H1 (cell line): ENCODE measurements at regions of chr12 and their contacts with region 1.

Region 1: DNA sequence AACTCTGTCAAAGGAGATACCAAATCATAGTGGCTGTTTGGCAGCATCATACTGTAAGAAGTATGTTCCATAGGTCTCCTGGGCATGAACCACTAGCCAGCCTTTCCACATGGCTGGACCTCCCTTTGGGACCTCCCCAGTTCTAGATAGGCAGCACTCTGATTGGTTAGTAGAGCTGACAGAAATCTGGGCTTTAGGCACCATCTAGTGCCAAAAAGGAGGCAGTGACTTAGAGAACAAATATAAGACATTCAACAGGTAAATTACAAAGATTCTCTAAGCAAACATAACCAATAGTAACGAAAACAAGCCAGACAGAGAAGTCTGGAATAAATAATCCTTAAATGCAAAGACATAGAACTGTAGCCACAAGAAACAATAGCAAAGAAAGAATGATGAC is 148.0 kb upstream of the PDE3A start:
- DNase-seq: no peak
- H3K4me3 ChIP-seq: no peak overlapping the region
- H3K27ac ChIP-seq: no peak overlapping the region
- H3K4me1 ChIP-seq: no peaks in the 10 kb centered on the region
- H3K27me3 ChIP-seq: peaks cover 0 to 1% (median 0%) of the 10 kb centered on the region in 4 experiments; a peak in 1 of 7 replicates
- CTCF ChIP-seq: peak in 2 of 3 experiments; percentile 53 to 54; a peak in 3 of 4 replicates
- EP300 ChIP-seq: no peak
- POLR2A ChIP-seq: no peak
- RAD21 ChIP-seq: peak; percentile 84 to 89

Region 2: DNA sequence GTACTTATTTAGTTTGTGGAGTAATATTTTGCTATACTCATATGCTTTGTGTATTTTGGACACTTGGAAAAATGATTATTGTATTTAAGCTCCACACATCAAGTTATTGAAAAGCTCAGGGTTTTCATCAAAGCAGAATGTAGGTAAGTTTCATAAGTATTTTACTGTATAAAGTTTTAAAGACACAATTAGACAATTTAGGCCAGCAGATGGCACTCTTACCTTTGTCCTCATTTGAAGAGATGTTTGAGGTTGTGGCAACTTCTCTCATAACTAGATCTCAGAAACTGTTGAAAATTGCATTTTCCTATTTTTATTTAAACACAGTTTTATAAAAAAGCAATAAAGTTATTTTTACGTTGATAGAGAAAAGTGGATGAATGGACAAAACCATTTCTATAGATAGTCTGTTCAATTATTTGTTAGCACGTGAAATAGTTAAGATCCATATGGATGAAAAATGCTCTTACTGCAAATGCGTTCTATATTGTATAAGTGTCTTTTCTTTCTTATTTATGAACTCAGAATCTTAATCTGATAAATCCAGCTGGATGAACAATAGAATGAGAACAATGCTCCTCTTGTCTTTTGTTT is 481.1 kb before region 1 on chr12:
- CTCF ChIA-PET with region 1: interaction called, 10 read pairs
- POLR2A ChIA-PET with region 1: no interaction called
- DNase-seq: no peak
- H3K4me3 ChIP-seq: no peak overlapping the region
- H3K27ac ChIP-seq: no peak overlapping the region
- H3K4me1 ChIP-seq: no peaks in the 10 kb centered on the region
- H3K27me3 ChIP-seq: no peaks in the 10 kb centered on the region
- CTCF ChIP-seq: peak in 2 of 3 experiments; percentile 53; a peak in 2 of 4 replicates
- EP300 ChIP-seq: no peak
- POLR2A ChIP-seq: no peak
- RAD21 ChIP-seq: peak; percentile 78 to 81

Region 3: GRCh38 chr12:19915392-19916195 is 304.7 kb before region 1 on chr12:
- CTCF ChIA-PET with region 1: interaction called, 15 read pairs
- POLR2A ChIA-PET with region 1: no interaction called
- DNase-seq: no peak
- H3K4me3 ChIP-seq: no peak overlapping the region
- H3K27ac ChIP-seq: no peak overlapping the region
- H3K4me1 ChIP-seq: peaks cover 0 to 15% (median 4%) of the 10 kb centered on the region in 4 experiments; a peak in 3 of 7 replicates
- H3K27me3 ChIP-seq: no peaks in the 10 kb centered on the region
- CTCF ChIP-seq: peak in 2 of 3 experiments; percentile 32 to 64; a peak in 2 of 4 replicates
- EP300 ChIP-seq: no peak
- POLR2A ChIP-seq: peak in 1 of 2 experiments; percentile 55; a peak in 1 of 3 replicates
- RAD21 ChIP-seq: peak; percentile 74 to 76

Region 4: GRCh38 chr12:20280515-20280914 is 60.2 kb after region 1 on chr12:
- CTCF ChIA-PET with region 1: no interaction called
- POLR2A ChIA-PET with region 1: no interaction called
- DNase-seq: no peak
- H3K4me3 ChIP-seq: no peak overlapping the region
- H3K27ac ChIP-seq: no peak overlapping the region
- H3K4me1 ChIP-seq: peaks cover 0 to 13% (median 1%) of the 10 kb centered on the region in 4 experiments; a peak in 2 of 7 replicates
- H3K27me3 ChIP-seq: no peaks in the 10 kb centered on the region
- CTCF ChIP-seq: no peak
- EP300 ChIP-seq: no peak
- POLR2A ChIP-seq: no peak
- RAD21 ChIP-seq: no peak